Body of pancreas (tissue), 4 donors: ENCODE measurements at regions of chr17 and their contacts with region 1.

Region 1: DNA sequence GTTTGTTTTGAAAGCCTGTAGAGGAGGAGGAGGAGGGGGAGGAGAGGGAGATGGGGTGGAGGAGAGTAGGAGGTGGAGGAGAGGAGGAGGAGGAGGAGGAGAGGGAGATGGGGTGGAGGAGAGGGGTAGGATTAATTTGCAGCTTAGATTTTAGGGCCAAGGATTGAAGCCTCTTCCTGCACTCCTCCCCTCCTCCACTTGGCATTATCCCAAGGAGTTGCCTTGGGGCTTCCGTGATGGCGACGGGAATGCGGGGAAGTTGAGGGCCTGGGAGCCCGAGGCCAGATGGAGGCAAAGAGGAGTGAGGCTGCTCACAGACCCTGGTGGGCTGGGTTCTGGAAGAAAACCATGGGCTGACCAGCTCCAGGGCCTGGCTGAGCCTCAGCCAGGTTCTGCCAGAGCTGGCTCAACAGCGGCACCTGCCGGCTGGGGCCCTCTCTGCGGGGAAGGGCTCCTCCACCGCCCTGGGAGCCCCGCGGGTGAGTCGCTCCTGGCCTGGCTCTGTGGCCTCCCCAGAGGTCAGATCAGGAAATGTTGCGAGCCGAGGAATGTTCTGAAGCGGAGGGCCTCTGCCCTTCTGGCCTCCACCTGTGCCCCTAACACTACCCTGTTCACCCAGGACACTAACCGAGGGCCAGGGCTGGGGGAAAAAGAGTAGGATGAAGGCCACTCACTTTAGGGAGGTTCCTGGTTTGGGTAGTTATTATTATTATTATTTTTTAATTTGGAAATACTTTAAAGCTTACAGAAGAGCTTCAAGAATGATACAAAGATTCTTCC is 23.9 kb upstream of the FMNL1 start:
- DNase-seq: peak; percentile 93 to 96 (median 94)
- ATAC-seq: peak; percentile 99
- H3K4me3 ChIP-seq: no peak overlapping the region
- H3K27ac ChIP-seq: peak overlapping the region in 3 of 4 donors; percentile 35 to 68 (median 49)
- H3K4me1 ChIP-seq: peaks cover 10% of the 10 kb centered on the region
- H3K27me3 ChIP-seq: no peaks in the 10 kb centered on the region
- CTCF ChIP-seq: peak; percentile 97 to 100 (median 99)
- POLR2A ChIP-seq: no peak

Region 2: DNA sequence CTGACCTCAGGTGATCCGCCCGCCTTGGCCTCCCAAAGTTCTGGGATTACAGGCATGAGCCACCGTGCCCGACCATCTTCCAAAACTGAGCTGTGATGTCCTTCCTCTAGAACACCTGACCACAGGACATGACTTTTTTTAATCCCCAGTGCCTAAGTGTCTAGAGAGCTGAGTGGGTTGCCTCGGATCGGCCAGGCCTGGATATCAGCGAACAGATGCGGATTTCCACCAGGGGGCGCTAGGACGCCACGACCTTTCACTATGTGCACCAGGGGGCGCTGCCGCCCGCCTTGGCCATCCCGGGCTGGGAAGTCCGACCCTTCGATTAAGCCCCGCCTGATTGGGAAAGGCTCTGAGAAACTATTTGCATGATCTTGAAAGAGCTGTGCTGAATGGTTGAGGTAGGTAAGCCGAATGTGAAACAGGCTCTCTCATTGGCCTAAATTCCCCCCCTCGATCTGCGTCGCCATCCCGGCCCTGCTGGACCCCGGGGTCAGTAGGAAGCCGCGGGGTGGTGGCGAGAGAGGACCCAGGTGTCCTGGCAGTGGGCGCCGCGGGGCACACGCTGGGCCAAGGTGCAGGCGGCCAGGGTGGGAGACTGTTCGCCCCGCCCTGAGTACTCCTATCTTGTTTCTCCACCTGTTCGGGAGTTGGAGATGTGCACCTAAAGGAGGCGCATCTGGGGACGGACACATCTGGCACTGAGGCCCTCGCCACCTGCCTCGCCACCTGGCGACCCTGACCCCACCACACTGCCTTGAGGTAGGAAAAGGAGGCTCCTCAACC is 62.4 kb before region 1 on chr17 and contains the start of gene ACBD4:
- intact Hi-C with region 1: loop called (anchors 5 kb)
- DNase-seq: peak; percentile 96 to 98 (median 97)
- ATAC-seq: peak; percentile 91
- H3K4me3 ChIP-seq: peak within 1 kb of the TSS; percentile 64 to 87
- H3K27ac ChIP-seq: peak within 1 kb of the TSS; percentile 60 to 80 (median 78)
- H3K4me1 ChIP-seq: peaks cover 49% of the 10 kb centered on the region
- H3K27me3 ChIP-seq: no peaks in the 10 kb centered on the region
- CTCF ChIP-seq: peak; percentile 100
- POLR2A ChIP-seq: peak; percentile 40 to 85 (median 80)
- total RNA-seq, gene ACBD4: 20.8 to 21.1 TPM

Region 3: DNA sequence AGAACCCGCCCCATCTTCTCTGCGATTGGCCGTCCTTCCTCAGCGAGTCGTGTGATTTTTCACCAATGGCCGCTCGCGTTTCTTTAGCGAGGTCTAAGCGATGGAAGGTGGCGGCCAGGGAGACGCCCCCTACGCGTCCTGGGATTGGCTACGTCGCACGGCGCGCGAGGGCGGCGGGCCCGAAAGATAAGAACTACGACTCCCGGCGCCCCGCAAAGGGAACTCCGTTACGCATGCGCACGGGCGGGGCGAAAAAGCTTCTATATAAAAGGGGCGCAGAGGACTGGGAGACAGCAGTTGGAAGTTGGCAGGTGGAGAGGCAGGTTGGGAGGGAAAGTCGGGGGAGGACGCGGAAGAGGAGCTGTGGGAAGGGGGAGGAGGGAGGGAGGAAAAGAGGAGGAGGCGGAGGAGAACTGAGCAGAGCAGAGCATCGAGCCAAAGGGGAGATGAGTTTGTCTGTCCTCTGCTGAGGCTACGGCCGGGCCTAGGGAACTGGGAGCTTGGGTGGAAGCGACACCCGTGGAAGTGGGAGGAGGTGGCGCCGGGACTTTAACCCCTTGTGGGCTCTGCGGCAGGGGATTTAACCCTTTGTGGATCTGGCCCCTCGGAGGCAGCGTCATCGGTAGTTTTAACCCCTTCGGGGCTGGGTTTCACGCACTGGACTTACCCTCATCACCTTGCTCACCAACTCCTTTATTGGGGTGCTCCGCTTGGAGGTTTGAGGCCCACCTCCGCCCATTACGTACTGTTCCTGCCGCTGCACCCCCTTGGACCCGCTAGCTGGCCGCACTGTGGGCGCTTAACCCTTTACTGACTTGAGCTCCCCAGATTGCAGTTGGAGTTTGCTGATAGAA is 49.3 kb before region 1 on chr17 and contains the start of gene HEXIM1:
- intact Hi-C with region 1: no loop called
- DNase-seq: peak; percentile 99 to 100 (median 99)
- ATAC-seq: peak; percentile 84
- H3K4me3 ChIP-seq: peak within 1 kb of the TSS; percentile 47 to 74
- H3K27ac ChIP-seq: peak within 1 kb of the TSS; percentile 85 to 99 (median 98)
- H3K4me1 ChIP-seq: peaks cover 63% of the 10 kb centered on the region
- H3K27me3 ChIP-seq: no peaks in the 10 kb centered on the region
- CTCF ChIP-seq: peak in 1 of 7 experiments; percentile 15
- POLR2A ChIP-seq: peak; percentile 99 to 100 (median 100)
- total RNA-seq, gene HEXIM1: 13.8 to 15.3 TPM

Region 4: GRCh38 chr17:45307290-45308015 is 109.7 kb after region 1 on chr17:
- intact Hi-C with region 1: no loop called
- DNase-seq: peak; percentile 48 to 77 (median 54)
- ATAC-seq: peak; percentile 65
- H3K4me3 ChIP-seq: no peak overlapping the region
- H3K27ac ChIP-seq: peak overlapping the region; percentile 82 to 96 (median 93)
- H3K4me1 ChIP-seq: peaks cover 84% of the 10 kb centered on the region
- H3K27me3 ChIP-seq: no peaks in the 10 kb centered on the region
- CTCF ChIP-seq: no peak
- POLR2A ChIP-seq: peak in 1 of 3 donors; percentile 24